AG04449 (cell line): ENCODE measurements at regions of chr11 and their contacts with region 1.

Region 1: DNA sequence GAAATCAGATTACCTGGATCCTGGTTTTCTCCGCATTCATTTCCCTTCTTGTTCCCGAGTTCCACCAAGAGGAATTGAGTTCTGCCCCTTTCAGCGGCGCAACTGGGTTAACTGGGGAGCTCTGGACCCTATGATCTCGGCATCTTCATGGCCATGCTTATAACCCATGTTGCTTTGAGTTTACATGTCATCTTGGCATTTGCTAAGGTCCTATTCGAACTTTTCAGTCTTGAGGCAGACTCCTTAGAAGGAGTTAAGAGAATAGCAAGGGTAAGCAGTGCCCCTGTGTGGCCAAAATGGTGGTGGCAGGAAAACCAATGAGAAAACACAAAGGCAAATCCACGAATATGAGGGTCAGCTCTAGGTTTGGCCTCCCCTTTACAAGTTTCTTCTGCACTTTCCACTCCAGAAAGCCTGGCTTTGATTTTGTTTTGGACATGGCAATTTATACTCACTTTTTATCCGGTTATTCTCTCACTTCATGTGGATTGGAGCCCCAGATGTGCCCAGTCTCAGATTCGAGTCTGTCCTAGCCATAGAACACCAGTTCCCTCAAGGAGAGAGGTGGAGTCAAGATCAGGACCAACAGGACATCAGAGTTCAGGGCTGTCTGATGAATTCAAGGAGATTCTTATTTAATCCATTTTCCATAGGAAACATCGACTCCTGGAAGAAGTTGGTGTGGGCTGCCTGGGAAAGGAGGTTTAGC is 55.3 kb upstream of the FBXO3 start:
- DNase-seq: peak; percentile 12
- H3K4me3 ChIP-seq: peak overlapping the region; percentile 53
- CTCF ChIP-seq: peak; percentile 73

Region 2: GRCh38 chr11:33802414-33802950 is 27.1 kb before region 1 on chr11:
- CTCF ChIA-PET with region 1: interaction called, 408 read pairs
- POLR2A ChIA-PET with region 1: no interaction called
- DNase-seq: peak; percentile 37
- H3K4me3 ChIP-seq: peak overlapping the region; percentile 55
- CTCF ChIP-seq: no peak

Region 3: DNA sequence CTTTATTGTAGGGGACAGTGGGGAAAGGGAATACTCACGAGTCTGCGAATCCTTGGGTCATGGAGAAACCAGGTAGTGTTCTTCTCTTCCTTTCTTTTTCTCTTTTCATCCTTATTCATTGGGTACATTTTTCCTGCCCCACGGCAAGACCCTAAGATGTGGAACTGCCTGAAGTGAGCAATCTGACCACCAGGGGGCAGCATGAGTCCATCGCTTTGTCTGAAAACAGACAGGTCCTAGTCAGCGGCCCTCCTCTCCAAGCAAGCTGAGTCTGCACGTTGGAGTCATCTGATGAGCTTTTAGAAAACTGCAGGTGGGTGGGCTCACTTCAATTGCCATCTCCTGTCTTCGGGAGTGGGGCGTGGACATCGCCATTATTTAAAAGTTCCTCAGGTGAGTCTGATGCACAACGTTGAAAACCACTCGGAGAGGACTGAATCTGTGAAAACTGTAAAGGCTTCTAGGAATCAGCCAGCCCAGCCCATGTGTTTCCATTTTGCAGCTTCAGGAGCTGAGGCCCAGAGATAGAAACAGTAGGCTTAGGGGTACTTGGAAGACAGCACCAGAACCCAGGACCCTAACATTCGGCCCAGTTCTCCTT is 21.3 kb before region 1 on chr11:
- CTCF ChIA-PET with region 1: interaction called, 408 read pairs
- POLR2A ChIA-PET with region 1: interaction called, 4 read pairs
- DNase-seq: peak; percentile 26
- H3K4me3 ChIP-seq: no peak overlapping the region
- CTCF ChIP-seq: peak; percentile 87

Region 4: GRCh38 chr11:33819278-33819677 is 10.3 kb before region 1 on chr11:
- CTCF ChIA-PET with region 1: interaction called, 17 read pairs
- POLR2A ChIA-PET with region 1: no interaction called
- DNase-seq: no peak
- H3K4me3 ChIP-seq: no peak overlapping the region
- CTCF ChIP-seq: no peak